ENCODE measurements at regions of chr11 and their contacts with region 1.

Region 1: DNA sequence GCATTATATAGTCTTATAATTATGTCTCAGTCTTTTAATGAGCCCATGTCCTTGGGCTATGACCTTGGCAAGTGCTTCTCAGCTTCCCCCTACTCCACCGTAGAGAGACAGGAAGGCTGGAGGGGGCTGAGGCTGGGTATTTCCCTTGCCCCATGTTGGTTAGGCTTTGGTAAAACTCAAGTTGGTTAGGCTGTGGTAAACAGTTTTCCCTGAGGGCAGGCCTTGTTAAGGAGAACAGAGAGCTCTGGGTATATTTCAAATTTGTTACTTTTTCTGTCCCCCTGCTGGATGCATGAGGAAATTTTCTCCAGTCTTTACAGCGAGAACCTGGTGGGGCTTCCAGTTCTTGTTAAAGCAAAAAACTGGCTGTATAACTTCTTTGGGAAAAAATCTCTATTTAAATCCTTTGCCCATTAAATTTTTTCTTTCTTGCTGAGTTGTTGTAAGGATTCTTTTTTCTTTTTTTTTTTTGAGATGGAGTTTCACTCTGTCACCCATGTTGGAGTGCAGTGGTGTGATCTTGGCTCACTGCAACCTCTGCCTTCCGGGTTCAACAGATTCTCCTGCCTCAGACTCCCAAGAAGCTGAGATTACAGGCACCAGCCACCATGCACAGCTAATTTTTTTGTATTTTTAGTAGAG is 12.2 kb upstream of the DCHS1 start:
- DNase-seq: peak; percentile 48
- ATAC-seq: peak; percentile 93
- H3K4me3 ChIP-seq: no peak overlapping the region
- H3K27ac ChIP-seq: no peak overlapping the region
- H3K4me1 ChIP-seq: no peaks in the 10 kb centered on the region
- H3K27me3 ChIP-seq: no peaks in the 10 kb centered on the region
- CTCF ChIP-seq: peak; percentile 40 to 54 (median 52); a peak in 5 of 6 replicates
- EP300 ChIP-seq: no peak
- POLR2A ChIP-seq: no peak
- RAD21 ChIP-seq: peak; percentile 41

Region 2: GRCh38 chr11:6531267-6531752 is 136.5 kb before region 1 on chr11:
- CTCF ChIA-PET with region 1: interaction called, 40 read pairs
- POLR2A ChIA-PET with region 1: no interaction called
- RAD21 ChIA-PET with region 1: interaction called, 4 read pairs
- SMC1A ChIA-PET with region 1: interaction called, 13 read pairs
- in situ Hi-C with region 1: no loop called
- intact Hi-C with region 1: loop called (anchors 5 kb)
- DNase-seq: peak; percentile 27
- ATAC-seq: peak; percentile 80
- H3K4me3 ChIP-seq: no peak overlapping the region
- H3K27ac ChIP-seq: no peak overlapping the region
- H3K4me1 ChIP-seq: peaks cover 8% of the 10 kb centered on the region; the same call in 1 of the 2 replicates
- H3K27me3 ChIP-seq: no peaks in the 10 kb centered on the region
- CTCF ChIP-seq: peak; percentile 66 to 73 (median 70)
- EP300 ChIP-seq: no peak
- POLR2A ChIP-seq: no peak
- RAD21 ChIP-seq: peak; percentile 89

Region 3: DNA sequence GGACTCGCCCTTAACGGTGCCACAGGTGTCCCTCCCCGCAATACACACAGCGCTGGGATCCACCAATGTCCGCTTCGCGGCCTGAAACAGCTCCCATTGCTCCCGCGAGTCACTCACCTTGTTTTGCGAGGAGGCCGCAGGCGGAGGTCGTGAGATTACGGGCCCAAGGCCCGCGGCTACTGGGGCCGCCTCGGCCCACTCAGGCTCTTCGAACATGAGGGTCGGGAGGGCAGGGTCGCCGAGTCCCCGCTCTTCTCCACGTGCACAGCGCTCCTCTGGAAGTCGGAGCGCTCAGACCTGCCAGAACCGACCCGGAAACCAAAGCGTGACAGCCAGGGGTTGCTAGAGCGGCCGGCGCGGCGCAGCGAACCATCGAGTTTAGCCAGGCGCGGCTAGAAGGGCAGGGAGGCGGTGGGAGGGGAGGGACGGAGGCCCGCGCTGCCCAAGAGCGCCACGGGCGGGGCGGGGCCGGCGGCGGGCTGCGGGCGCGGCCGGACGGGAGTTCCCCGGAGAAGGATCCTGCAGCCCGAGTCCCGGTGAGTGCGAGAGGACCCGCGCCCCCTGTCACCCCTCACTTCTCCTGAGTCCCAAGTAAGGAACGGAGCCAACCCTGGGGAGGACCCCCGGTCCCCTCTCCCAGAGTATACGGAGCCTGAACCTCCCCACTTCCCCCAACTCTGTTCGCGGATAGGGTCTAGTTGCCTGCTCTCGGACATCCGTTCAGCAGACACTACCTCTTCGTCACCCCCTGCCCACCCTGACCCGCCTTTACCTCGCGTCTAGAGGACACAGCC is 64.4 kb before region 1 on chr11 and contains the starts of genes ILK and RRP8:
- CTCF ChIA-PET with region 1: interaction called, 24 read pairs
- POLR2A ChIA-PET with region 1: interaction called, 7 read pairs
- RAD21 ChIA-PET with region 1: interaction called, 17 read pairs
- SMC1A ChIA-PET with region 1: interaction called, 14 read pairs
- in situ Hi-C with region 1: no loop called
- intact Hi-C with region 1: no loop called
- DNase-seq: peak; percentile 59
- ATAC-seq: peak; percentile 83
- H3K4me3 ChIP-seq: peak within 1 kb of the TSS; percentile 96
- H3K27ac ChIP-seq: peak within 1 kb of the TSS; percentile 85
- H3K4me1 ChIP-seq: peaks cover 25% of the 10 kb centered on the region
- H3K27me3 ChIP-seq: no peaks in the 10 kb centered on the region
- CTCF ChIP-seq: peak in 1 of 3 experiments; percentile 1; a peak in 1 of 6 replicates
- EP300 ChIP-seq: peak in 1 of 2 experiments; percentile 48; a peak in 1 of 4 replicates
- POLR2A ChIP-seq: peak; percentile 94
- RAD21 ChIP-seq: 0 out of 2 replicates have a peak, but pooled peaks have one; percentile 21
- polyA plus RNA-seq, gene ILK: 51.8 to 77.8 TPM
- polyA plus RNA-seq, gene RRP8: 4.7 to 15.8 TPM

Region 4: GRCh38 chr11:6612213-6613041 is 55.4 kb before region 1 on chr11 and contains the start of gene TAF10:
- CTCF ChIA-PET with region 1: interaction called, 4 read pairs
- POLR2A ChIA-PET with region 1: interaction called, 7 read pairs
- RAD21 ChIA-PET with region 1: interaction called, 5 read pairs
- SMC1A ChIA-PET with region 1: interaction called, 6 read pairs
- in situ Hi-C with region 1: no loop called
- intact Hi-C with region 1: loop called (anchors 2 kb)
- DNase-seq: peak; percentile 77
- ATAC-seq: peak; percentile 92
- H3K4me3 ChIP-seq: peak within 1 kb of the TSS; percentile 87
- H3K27ac ChIP-seq: peak within 1 kb of the TSS; percentile 99
- H3K4me1 ChIP-seq: peaks cover 25% of the 10 kb centered on the region
- H3K27me3 ChIP-seq: no peaks in the 10 kb centered on the region
- CTCF ChIP-seq: peak; percentile 30 to 62 (median 42); a peak in 5 of 6 replicates
- EP300 ChIP-seq: no peak
- POLR2A ChIP-seq: peak; percentile 96
- RAD21 ChIP-seq: no peak
- polyA plus RNA-seq, gene TAF10: 27.2 to 78.9 TPM

Region 5: GRCh38 chr11:6656936-6657335 is 10.9 kb before region 1 on chr11:
- CTCF ChIA-PET with region 1: interaction called, 8 read pairs
- POLR2A ChIA-PET with region 1: no interaction called
- RAD21 ChIA-PET with region 1: no interaction called
- SMC1A ChIA-PET with region 1: interaction called, 12 read pairs
- in situ Hi-C with region 1: no loop called
- intact Hi-C with region 1: no loop called
- DNase-seq: no peak
- ATAC-seq: no peak
- H3K4me3 ChIP-seq: no peak overlapping the region
- H3K27ac ChIP-seq: no peak overlapping the region
- H3K4me1 ChIP-seq: no peaks in the 10 kb centered on the region
- H3K27me3 ChIP-seq: peaks cover 4% of the 10 kb centered on the region in 2 experiments
- CTCF ChIP-seq: no peak
- EP300 ChIP-seq: no peak
- POLR2A ChIP-seq: no peak
- RAD21 ChIP-seq: no peak

Region 6: DNA sequence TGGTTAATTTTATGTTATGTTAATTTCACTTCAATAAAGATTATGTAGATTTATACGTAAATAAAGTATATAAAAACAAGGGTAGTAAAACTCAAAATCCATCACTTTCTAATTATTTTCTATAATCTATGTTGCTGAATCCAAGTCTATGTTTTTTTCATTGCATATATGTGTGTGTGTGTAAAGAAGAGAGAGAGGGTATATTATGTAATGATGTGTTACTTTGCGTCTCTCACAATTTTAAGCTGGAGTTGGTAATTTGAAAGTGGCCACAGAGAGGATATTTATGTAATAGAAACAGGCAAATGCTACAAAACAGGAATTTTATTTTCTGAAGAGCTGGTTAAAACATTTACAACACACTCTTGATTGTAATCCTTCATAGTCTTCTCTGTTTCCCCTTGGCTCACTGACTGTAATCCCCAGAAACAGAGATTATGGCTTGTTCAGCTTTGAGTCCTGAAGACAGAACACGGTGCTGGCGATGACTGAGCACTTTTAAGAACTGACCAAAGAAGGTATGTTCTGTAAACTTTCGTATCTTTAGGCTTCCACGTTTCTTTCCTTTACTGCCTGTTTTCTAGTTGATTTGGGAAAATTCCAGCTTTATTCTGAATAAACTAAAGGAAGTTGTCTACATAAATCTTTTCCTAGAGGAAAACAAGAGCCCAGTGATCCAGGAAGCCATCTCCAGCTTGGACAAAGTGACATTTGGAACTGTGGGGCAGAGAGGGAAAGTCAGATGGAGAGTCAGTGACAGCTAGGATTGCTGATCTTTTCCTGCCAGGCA is 60.3 kb after region 1 on chr11:
- CTCF ChIA-PET with region 1: no interaction called
- POLR2A ChIA-PET with region 1: no interaction called
- RAD21 ChIA-PET with region 1: no interaction called
- SMC1A ChIA-PET with region 1: no interaction called
- in situ Hi-C with region 1: no loop called
- intact Hi-C with region 1: no loop called
- DNase-seq: no peak
- ATAC-seq: no peak
- H3K4me3 ChIP-seq: no peak overlapping the region
- H3K27ac ChIP-seq: no peak overlapping the region
- H3K4me1 ChIP-seq: peaks cover under 1% of the 10 kb centered on the region; the same call in 1 of the 2 replicates
- H3K27me3 ChIP-seq: no peaks in the 10 kb centered on the region
- CTCF ChIP-seq: no peak
- EP300 ChIP-seq: no peak
- POLR2A ChIP-seq: no peak
- RAD21 ChIP-seq: no peak

Region 7: DNA sequence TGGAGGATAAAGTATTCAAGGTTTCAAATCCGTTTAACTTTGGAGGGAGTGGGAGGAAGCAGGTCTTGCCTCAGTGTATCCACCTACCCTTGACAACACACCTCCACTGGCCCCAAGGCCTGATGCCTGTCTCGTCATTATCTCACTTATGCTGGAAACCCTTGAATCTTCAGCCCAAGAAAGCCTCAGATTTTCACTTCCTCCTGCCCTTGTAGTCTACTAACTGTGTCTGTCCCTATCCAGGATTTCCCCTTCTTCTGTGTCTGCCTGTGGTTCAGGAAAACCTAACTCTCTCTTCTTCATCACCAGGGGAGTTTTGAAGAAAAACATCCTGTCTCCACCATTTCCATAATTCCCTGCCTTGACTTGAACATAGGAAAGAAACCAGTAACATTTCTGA is 640.0 kb after region 1 on chr11:
- CTCF ChIA-PET with region 1: no interaction called
- POLR2A ChIA-PET with region 1: no interaction called
- RAD21 ChIA-PET with region 1: no interaction called
- SMC1A ChIA-PET with region 1: no interaction called
- in situ Hi-C with region 1: no loop called
- intact Hi-C with region 1: no loop called
- DNase-seq: peak; percentile 21
- ATAC-seq: peak; percentile 80
- H3K4me3 ChIP-seq: no peak overlapping the region
- H3K27ac ChIP-seq: no peak overlapping the region
- H3K4me1 ChIP-seq: no peaks in the 10 kb centered on the region; the same call in 1 of the 2 replicates
- H3K27me3 ChIP-seq: no peaks in the 10 kb centered on the region
- CTCF ChIP-seq: no peak
- EP300 ChIP-seq: no peak
- POLR2A ChIP-seq: no peak
- RAD21 ChIP-seq: no peak